Activated CD8-positive, alpha-beta T cell treated with anti-CD3 and anti-CD28 coated beads, Interleukin-2, amount 10 ng/mL, durations not matched to agents 7 days and 5 days (primary cell): ENCODE measurements at regions of chr11 and their contacts with region 1.

Region 1: GRCh38 chr11:78645226-78646202 is 70.8 kb upstream of the NARS2 start:
- DNase-seq: peak; percentile 77
- ATAC-seq: peak; percentile 84
- H3K4me3 Mint-ChIP-seq: no peak overlapping the region
- H3K27ac Mint-ChIP-seq: no peak overlapping the region
- H3K4me1 Mint-ChIP-seq: peaks cover 2% of the 10 kb centered on the region
- H3K27me3 Mint-ChIP-seq: no peaks in the 10 kb centered on the region

Region 2: DNA sequence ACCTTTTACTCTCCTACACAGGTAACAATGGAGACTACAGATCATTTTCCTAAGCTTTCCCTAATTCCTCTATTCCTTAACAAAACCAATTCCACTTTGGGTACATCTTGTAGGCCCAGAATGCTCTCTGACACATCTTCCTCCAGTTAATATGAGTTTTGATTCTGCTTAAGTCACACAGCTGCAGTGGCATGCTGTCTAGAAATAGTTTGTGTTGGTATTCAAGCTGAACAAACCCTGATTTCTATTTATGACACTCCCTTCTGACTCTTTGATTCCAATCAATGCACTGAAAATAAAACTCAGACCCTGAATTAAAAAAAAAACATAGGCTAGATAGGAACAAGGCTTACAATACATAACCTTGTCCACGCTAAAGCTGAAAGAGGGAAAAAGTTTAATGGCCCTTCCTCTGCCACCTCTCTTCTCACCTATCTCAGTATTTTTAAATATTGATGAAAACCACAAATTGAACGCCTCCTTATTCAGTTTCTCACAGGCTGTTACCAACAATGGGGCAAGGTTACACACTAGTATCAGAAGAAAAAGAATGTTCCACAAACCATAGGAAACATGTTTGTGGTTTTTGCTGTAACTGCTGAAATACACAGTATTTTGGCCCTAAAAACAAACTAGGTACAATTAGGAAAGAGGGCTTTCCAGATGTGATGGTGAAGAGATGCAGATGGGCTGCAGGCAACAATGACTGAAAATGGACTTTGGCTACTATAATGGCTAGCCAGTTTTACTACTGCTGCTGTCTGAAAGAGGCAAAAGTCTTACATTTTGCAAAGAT is 192.2 kb before region 1 on chr11:
- CTCF ChIA-PET with region 1: no interaction called
- POLR2A ChIA-PET with region 1: no interaction called
- DNase-seq: no peak
- ATAC-seq: peak; percentile 51
- H3K4me3 Mint-ChIP-seq: no peak overlapping the region
- H3K27ac Mint-ChIP-seq: peak overlapping the region; percentile 31
- H3K4me1 Mint-ChIP-seq: peaks cover 24% of the 10 kb centered on the region
- H3K27me3 Mint-ChIP-seq: no peaks in the 10 kb centered on the region

Region 3: DNA sequence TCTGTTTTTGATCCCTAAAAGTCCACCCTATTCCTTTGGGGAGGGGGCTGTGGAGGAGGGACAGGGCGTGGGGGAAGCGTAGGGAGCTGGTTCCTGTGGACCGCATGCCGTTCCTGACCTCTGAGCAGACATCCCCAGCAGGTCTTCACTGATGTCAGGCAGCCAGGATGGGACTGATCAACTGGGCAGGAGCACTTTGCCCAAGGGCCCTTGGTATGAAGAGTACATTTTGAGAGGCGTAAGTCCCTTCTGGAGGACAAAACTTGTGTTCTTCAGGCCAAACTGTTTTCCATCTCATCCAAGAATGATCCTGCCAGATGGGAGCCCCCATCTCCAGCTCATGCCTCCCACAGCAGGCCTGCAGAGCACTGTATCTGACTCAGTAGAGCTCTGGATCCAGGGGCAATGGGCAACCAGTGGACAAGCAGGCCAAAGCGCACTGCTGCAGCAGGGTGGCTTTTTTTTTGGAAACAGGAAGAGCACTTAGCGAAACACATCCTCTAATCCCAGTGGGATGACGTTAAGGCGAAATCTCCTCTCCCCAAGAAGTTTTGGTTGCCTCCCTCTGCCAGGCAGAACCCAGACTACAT is 10.1 kb after region 1 on chr11:
- CTCF ChIA-PET with region 1: interaction called, 14 read pairs
- POLR2A ChIA-PET with region 1: no interaction called
- DNase-seq: peak; percentile 16
- ATAC-seq: no peak
- H3K4me3 Mint-ChIP-seq: no peak overlapping the region
- H3K27ac Mint-ChIP-seq: no peak overlapping the region
- H3K4me1 Mint-ChIP-seq: no peaks in the 10 kb centered on the region
- H3K27me3 Mint-ChIP-seq: no peaks in the 10 kb centered on the region

Region 4: GRCh38 chr11:78715639-78716311 is 70.3 kb after region 1 on chr11:
- CTCF ChIA-PET with region 1: interaction called, 119 read pairs
- POLR2A ChIA-PET with region 1: no interaction called
- DNase-seq: peak; percentile 52
- ATAC-seq: peak; percentile 44
- H3K4me3 Mint-ChIP-seq: no peak overlapping the region
- H3K27ac Mint-ChIP-seq: no peak overlapping the region
- H3K4me1 Mint-ChIP-seq: no peaks in the 10 kb centered on the region
- H3K27me3 Mint-ChIP-seq: peaks cover 4% of the 10 kb centered on the region

Region 5: DNA sequence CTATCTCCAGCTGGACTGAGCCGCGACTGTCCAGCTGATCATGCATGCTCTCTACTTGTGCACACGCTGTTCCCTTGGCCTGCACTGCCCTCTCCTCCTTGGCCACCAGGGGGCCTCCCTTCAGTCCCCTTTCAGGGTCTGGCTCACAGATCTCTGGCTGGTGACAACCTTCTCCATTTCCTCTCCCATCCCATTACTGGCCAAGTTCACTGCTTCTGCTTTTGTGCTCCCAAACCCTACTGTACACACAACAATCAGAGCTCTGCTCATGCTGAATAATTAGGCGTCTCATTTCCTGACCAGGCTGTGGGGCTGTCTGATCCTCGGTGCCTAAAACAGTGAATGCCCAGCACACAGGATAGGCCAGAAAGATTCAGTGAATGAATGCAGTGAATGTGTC is 153.1 kb after region 1 on chr11:
- CTCF ChIA-PET with region 1: interaction called, 20 read pairs
- POLR2A ChIA-PET with region 1: no interaction called
- DNase-seq: peak; percentile 50
- ATAC-seq: peak; percentile 77
- H3K4me3 Mint-ChIP-seq: no peak overlapping the region
- H3K27ac Mint-ChIP-seq: no peak overlapping the region
- H3K4me1 Mint-ChIP-seq: no peaks in the 10 kb centered on the region
- H3K27me3 Mint-ChIP-seq: peaks cover 2% of the 10 kb centered on the region

Region 6: DNA sequence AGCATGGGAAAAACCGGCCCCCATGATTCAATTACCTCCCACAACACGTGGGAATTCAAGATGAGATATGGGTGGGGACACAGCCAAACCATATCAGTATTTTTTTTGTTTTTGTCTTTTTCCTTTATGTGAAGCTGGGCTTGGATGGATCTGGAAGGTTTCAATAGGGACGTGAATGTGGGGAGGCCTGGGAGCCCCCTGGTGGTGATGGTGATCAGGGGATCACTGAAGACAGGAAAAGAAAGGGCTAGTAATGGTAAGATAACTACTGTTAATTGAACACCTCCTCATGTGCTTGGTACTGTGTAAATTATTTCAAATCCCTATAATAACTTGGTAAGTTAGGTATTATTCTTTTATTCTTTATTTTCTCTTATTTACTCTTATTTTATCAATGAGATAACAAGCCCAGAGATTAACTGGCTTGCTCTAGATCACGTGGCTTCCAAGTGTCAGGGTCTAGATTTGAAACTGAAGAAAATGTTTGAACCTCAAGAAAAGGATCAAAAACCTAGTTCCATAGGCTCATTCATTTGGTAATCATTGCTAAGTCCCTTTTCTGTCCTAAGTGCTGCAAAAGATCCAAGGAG is 431.1 kb after region 1 on chr11:
- CTCF ChIA-PET with region 1: interaction called, 11 read pairs
- POLR2A ChIA-PET with region 1: no interaction called
- DNase-seq: peak; percentile 35
- ATAC-seq: no peak
- H3K4me3 Mint-ChIP-seq: no peak overlapping the region
- H3K27ac Mint-ChIP-seq: no peak overlapping the region
- H3K4me1 Mint-ChIP-seq: no peaks in the 10 kb centered on the region
- H3K27me3 Mint-ChIP-seq: peaks cover 3% of the 10 kb centered on the region

Region 7: DNA sequence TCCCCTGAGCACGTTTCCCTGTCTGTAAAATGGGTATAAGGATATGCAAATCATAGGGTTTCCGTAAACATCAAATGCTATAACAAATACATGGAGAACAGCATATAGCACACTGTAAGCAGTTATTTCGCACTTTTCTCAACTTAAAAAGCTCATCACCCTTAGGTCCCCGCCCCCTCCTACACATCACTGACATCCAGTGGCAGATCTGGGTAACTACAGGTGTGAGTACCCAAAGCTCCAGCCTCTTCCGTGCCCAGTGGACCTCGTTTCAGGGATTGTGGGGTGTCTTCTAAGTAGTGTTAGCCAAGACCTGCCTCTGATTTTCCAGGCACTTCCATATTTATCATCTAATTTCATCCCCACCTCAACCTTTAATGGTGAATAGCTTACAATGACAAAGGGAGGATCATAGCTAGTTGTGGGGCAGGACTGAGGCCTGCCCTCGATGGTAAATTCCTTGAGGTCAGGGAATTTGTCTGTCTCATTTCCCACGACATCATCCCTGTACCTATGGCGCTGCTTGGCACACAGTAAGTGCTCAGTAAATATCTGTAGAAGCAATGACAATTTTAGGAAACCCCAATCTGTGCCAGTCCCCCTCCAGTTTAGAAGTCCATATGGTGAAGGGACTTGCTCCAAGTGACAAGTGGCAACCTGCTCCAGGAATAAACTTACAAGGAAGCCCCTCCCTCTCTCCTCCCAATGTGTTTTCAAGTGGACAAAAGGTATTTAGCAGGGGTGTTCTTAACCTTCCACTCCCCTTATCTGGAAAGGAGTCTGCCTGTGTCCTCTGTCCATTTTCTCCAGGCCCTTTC is 454.8 kb after region 1 on chr11:
- CTCF ChIA-PET with region 1: interaction called, 48 read pairs
- POLR2A ChIA-PET with region 1: no interaction called
- DNase-seq: peak; percentile 53
- ATAC-seq: peak; percentile 57
- H3K4me3 Mint-ChIP-seq: no peak overlapping the region
- H3K27ac Mint-ChIP-seq: no peak overlapping the region
- H3K4me1 Mint-ChIP-seq: no peaks in the 10 kb centered on the region
- H3K27me3 Mint-ChIP-seq: no peaks in the 10 kb centered on the region

Region 8: DNA sequence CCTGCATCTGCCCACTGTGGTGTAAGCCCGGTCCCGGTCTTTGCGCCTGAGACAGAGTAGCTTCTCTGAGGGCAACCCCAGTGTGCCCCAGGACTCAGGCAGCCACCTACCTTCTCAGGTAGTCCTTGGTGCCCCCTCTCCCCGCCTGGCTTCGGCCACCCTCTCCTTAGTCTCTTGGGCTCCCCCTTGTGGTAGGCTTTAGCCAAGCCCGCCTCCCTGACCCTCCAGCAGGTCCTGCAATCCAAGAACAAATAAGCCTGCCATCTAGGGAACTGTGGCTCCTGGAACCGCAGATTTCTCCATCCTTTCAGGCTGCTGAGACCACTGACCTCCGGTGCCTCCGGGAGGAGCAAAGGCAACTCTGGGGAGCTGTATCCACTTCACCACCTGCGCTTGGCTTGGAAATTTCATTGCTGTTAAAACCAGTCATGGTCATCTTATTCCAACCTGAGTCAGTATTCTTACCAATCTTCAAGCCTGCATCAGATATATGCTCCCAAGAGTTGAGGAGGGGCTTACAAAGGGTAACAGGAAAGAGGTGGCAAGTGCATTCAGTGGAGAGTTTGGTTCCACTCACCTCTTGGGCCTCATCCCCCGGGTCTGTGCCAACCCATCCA is 848.1 kb after region 1 on chr11:
- CTCF ChIA-PET with region 1: interaction called, 19 read pairs
- POLR2A ChIA-PET with region 1: no interaction called
- DNase-seq: peak; percentile 54
- ATAC-seq: no peak
- H3K4me3 Mint-ChIP-seq: no peak overlapping the region
- H3K27ac Mint-ChIP-seq: no peak overlapping the region
- H3K4me1 Mint-ChIP-seq: no peaks in the 10 kb centered on the region
- H3K27me3 Mint-ChIP-seq: no peaks in the 10 kb centered on the region